ENCODE measurements at regions of chr1 and their contacts with region 1.

Region 1: DNA sequence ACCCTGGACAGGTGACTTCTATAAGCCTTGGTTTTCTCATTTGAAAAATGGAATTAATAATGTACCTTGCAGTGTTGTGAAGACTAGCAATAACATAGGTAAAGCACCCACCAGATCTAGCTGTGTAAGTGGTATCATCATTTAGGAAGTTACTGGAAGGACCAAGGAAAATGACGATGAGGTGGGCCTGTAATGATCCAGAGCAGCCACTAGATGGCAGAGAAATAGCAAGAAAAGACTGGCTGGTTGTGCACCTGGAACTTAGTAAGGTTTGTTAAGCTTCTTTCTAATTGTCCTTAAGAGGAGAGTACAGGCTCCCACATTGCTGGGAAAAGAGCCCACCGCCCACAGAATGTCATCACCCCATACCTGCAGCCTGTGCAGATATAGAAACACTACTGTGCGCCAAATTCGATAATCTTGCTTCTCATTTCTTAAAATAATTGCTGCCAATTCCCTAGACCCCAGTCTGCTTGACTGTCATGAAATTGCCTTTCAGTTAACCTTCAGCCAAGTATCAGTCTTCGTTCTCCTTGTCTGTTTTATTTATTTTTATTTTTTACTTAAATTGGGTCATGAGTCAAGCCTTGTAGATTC is 37.2 kb downstream of the WNT4 start:
- DNase-seq: no peak
- ATAC-seq: peak; percentile 28 to 41

Region 2: DNA sequence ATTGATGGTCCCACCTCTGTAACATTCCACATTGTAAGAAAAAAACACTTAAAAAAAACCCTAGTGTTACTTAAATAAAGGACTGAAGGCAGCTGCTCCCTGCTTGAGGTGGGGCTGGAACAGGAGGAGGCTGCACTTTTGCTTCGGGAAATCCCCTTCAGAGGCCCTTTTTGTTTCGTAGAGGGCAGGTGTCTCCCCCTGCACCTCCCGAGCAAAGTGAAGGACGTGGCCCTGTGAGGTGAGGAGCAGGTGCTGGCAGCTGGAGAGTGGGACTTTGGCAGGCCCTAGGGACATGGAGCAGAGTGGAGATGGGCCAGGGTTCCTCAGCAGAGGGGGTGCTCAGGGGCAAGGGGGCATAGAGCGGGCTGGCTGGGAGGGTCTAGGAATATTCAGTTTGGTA is 70.5 kb after region 1 on chr1:
- intact Hi-C with region 1: no loop called
- DNase-seq: no peak
- ATAC-seq: no peak

Region 3: DNA sequence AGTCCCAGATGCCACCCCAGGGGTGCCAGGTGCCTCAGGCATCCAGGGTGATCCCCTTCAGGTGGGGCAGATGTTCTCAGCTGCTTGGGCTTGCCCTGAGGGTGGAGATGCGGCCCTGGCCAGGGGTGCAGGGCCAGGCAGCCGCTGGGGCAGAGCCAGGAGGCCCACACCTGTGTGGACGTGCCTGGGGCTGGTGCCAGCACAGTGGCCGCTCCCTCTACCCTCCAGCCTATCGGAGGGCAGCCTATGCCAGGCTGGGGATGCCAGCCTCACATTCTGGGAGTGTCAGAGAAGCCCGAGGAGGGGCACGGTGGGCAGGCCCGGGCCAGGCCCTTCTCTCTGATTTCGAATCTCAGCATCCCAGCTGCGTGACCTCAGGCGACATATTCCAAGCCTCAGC is 133.7 kb after region 1 on chr1:
- intact Hi-C with region 1: no loop called
- DNase-seq: no peak
- ATAC-seq: no peak

Region 4: GRCh38 chr1:22275721-22276395 is 170.1 kb after region 1 on chr1:
- intact Hi-C with region 1: loop called in 1 of 2 experiments (anchors 10 kb)
- DNase-seq: peak; percentile 40
- ATAC-seq: peak; percentile 65 to 83

Region 5: DNA sequence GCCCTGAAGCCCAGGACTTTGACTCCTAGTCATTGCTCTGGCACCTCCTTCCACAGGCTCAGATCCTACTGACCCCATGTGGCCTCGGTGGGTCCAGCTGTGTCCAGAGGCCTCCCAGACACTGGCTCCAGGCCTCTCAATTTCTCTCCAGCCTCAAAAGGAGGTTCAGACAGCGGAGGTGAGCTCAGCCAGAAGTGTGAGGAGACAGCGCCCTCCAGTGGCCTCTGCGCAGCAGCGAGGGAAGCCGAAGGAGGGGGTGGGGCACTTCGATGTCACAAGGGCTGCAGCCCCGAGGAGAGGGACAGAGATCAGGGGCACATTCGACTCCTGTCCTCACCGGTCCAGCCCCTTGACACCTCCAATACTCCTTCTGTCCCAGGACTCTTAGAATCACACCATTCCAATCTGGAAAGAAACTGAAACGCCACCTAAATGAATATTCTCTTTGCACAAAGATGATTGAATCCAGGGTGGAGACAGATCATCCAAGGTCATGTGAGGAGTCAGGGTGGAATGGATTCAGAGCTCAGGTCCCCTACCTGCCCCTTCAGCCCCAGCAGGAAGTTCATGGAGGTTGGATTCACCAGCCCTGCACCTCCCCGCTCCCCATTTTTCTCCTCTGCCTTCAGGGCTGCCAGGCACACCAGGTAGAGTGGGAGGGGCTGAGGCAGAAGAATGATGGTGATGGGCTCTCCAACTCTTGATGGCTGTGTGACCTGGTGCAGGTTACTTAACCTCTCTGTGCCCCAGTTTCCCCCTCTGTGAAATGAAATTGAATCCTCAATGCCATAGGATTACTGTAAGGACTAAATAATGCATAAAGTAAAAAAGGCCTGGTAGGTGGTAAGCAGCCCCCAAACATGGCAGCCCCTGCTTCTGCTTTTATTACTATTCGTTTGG is 311.1 kb after region 1 on chr1:
- intact Hi-C with region 1: loop called (anchors 2 to 10 kb)
- DNase-seq: peak; percentile 67
- ATAC-seq: peak; percentile 47 to 59

Measured in left cardiac atrium (tissue), 4 donors.